Naive thymus-derived CD4-positive, alpha-beta T cell (primary cell): ENCODE measurements at regions of chr16 and their contacts with region 1.

Region 1: DNA sequence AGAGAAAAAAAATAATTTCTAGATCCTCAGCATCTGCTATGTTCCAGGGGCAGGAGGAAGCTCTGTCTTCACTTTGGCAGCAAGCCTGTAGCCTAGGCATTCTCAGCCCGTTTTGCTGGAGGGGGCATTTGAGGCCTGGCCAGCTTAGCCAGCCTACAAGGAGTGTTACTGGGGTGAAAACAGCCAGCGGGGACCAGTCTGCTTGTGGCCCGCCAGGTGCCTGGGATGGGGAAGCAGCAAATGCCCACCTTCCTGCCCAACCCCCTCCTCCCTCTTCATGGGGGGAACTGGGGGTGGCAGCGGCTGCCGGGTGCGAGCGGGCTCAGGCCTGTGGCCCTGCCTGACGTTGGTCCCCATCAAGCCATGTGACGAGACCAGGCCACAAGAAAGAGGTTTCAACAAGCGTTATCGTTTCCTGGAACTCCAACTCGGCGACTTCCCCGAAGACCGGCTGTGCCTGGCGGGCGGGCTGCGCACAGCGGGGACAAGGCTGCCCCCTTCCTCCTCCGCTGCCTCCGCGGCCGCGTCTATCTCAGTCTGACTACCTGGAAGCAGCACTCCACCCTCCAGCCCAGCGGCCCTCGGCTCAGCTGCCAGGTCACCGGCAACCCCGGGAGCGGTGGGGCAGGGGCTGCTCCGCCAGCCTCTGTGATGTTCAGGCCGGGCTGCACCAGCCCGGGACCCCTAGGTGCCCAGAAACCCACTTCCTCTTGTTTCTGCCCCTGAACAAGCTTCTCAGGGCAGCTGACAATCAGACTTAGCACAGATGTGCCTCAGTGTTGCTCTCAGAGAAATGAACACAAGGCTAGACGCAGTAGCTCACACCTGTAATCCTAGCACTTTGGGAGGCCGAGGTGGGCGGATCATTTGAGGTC is 22.9 kb downstream of the SOCS1 start:
- DNase-seq: peak; percentile 64 to 90 (median 85)
- ATAC-seq: peak; percentile 89
- H3K4me3 ChIP-seq: peak overlapping the region; percentile 50
- H3K4me3 Mint-ChIP-seq: peak overlapping the region; percentile 60 to 84 (median 76)
- H3K27ac ChIP-seq: peak overlapping the region; percentile 89
- H3K27ac Mint-ChIP-seq: peak overlapping the region; percentile 82 to 98 (median 97)
- H3K4me1 ChIP-seq: peaks cover 34 to 42% of the 10 kb centered on the region in 2 donors
- H3K4me1 Mint-ChIP-seq: peaks cover 45 to 86% (median 64%) of the 10 kb centered on the region in 7 donors
- H3K27me3 ChIP-seq: no peaks in the 10 kb centered on the region
- H3K27me3 Mint-ChIP-seq: no peaks in the 10 kb centered on the region

Region 2: GRCh38 chr16:11105038-11105903 is 127.8 kb before region 1 on chr16:
- CTCF ChIA-PET with region 1: no interaction called
- POLR2A ChIA-PET with region 1: no interaction called
- intact Hi-C with region 1: loop called in 1 of 2 experiments (anchors 5 kb)
- DNase-seq: peak in 3 of 9 donors; percentile 10 to 35 (median 28)
- ATAC-seq: peak; percentile 80
- H3K4me3 ChIP-seq: no peak overlapping the region
- H3K4me3 Mint-ChIP-seq: peak overlapping the region in 8 of 10 donors; percentile 5 to 78 (median 32)
- H3K27ac ChIP-seq: no peak overlapping the region
- H3K27ac Mint-ChIP-seq: peak overlapping the region in 7 of 9 donors; percentile 1 to 88 (median 19)
- H3K4me1 ChIP-seq: peaks cover 16 to 18% of the 10 kb centered on the region in 2 donors
- H3K4me1 Mint-ChIP-seq: peaks cover 25 to 75% (median 27%) of the 10 kb centered on the region in 7 donors
- H3K27me3 ChIP-seq: no peaks in the 10 kb centered on the region
- H3K27me3 Mint-ChIP-seq: no peaks in the 10 kb centered on the region

Region 3: GRCh38 chr16:11181899-11182279 is 51.2 kb before region 1 on chr16:
- CTCF ChIA-PET with region 1: no interaction called
- POLR2A ChIA-PET with region 1: no interaction called
- intact Hi-C with region 1: loop called in 1 of 2 experiments (anchors 5 kb)
- DNase-seq: no peak
- ATAC-seq: peak; percentile 81
- H3K4me3 ChIP-seq: no peak overlapping the region
- H3K4me3 Mint-ChIP-seq: no peak overlapping the region
- H3K27ac ChIP-seq: no peak overlapping the region
- H3K27ac Mint-ChIP-seq: peak overlapping the region in 1 of 9 donors; percentile 63
- H3K4me1 ChIP-seq: no peaks in the 10 kb centered on the region
- H3K4me1 Mint-ChIP-seq: peaks cover 0 to 39% (median 1%) of the 10 kb centered on the region in 7 donors
- H3K27me3 ChIP-seq: no peaks in the 10 kb centered on the region
- H3K27me3 Mint-ChIP-seq: no peaks in the 10 kb centered on the region